ENCODE measurements at regions of chr14 and their contacts with region 1.

Region 1: DNA sequence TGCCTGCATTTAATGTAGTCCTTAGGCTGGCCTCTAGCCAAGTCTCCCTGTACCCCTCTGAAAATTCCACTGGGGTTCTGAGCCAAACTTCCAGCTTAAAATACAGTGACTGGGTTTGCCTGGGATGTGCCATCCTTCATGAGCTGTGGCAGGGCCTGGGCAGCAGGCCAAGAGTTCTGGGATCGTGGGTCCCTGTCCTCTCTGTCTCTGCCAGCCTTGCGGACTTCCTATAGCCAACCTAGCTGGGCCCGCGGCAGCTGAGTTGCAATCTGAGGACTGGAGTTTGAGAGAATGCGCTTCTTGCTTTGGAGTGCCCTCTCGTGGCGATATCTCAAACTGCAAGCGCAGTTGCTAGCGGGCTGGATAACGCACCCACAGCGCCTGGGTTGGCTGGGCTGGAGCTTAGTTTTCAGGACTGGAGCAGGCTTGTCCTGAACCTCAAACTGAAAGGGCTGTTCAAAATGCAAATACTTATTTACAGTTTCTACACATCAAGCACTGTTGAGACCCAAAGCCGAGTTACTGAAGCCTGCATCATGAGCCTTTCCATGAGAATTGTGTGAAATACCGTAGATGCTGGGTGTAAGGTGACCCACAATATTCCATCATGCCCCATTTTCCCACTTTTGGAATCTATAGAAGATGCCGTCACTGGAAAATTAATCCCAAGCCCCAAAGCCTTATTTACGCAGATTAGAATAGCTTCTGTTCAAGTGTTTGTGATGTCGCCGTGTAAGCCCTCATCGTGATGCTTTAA is 7.3 kb upstream of the IFI27L2 start:
- DNase-seq: peak; percentile 75
- CTCF ChIP-seq: peak; percentile 93

Region 2: GRCh38 chr14:94001501-94002396 is 135.0 kb before region 1 on chr14:
- CTCF ChIA-PET with region 1: interaction called, 16 read pairs
- POLR2A ChIA-PET with region 1: no interaction called
- DNase-seq: peak; percentile 82
- CTCF ChIP-seq: peak; percentile 97

Region 3: DNA sequence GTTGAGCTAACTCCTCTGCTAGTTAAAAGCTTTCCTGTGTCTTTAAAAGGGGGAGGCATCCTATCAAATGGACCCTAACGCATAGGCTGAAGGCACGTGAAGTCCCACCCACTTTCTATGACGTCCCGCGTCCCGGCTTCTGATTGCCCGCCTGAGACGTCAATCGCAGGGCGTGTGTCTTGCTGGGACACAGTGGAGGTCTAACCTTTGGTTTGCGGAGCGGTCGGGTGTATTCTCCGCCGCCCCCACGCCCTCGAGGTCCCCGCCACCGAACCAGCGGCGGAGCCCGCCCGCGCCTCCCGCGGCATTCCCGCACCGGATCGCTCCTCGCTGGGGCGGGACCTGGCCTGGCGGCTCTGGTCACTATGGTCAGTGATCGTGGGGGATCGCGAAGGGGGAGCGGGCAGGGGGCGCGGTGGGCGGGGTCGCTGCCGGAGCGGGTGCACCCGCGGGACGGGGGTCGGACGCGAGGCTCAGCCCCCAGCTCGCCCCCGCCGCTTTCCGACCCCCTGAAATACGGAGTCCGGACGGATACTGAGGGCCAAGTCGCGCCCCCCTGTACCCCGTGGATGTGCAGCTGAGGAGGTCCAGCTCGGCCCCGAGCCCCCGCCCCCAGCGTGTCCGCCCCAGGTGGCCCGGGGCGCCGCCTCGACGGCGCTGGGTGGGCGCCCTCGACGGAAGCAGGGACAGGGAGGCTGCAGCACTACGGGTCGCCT is 110.4 kb before region 1 on chr14 and contains the start of gene OTUB2:
- CTCF ChIA-PET with region 1: interaction called, 182 read pairs
- POLR2A ChIA-PET with region 1: no interaction called
- DNase-seq: peak; percentile 100
- CTCF ChIP-seq: no peak

Region 4: GRCh38 chr14:94056579-94057308 is 80.0 kb before region 1 on chr14:
- CTCF ChIA-PET with region 1: interaction called, 12 read pairs
- POLR2A ChIA-PET with region 1: no interaction called
- DNase-seq: no peak
- CTCF ChIP-seq: no peak

Region 5: DNA sequence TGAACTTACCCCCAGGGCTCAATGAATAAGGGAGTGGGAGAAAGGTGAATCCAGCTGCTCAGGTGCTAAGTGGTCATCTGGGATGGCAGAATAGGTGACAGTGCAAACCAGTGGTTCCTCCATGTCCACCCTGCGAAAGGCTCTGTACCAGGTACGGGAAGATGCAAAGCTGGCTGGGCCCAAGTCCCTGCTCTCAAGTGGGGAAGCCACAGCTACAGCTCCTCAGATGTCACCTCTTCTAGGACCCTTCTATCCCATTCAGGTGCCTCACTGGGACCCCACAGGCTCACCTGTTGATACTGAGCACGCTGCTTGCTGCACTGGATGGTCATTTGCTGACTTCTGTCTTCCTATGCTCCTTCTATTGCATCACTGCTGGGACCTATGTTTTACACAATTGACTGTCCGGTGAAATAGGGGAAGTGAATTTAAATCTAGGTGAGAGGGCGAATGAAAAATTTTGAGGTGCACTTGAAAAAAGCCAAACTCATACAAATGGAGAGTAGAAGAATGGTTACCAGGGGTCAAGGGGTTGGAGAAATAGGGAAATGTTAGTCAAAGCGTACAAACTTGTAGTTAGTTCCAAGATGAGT is 17.1 kb after region 1 on chr14:
- CTCF ChIA-PET with region 1: interaction called, 15 read pairs
- POLR2A ChIA-PET with region 1: no interaction called
- DNase-seq: no peak
- CTCF ChIP-seq: no peak

Region 6: GRCh38 chr14:94180655-94181271 is 44.0 kb after region 1 on chr14:
- CTCF ChIA-PET with region 1: interaction called, 23 read pairs
- POLR2A ChIA-PET with region 1: no interaction called
- DNase-seq: peak; percentile 35
- CTCF ChIP-seq: peak; percentile 61

Measured in GM10248 (cell line).